Activated T-helper 2 cell treated with anti-CD3 and anti-CD28 coated beads, Interferon-gamma antibody, Interleukin-2, Interleukin-4, amounts not matched to agents 10 μg/mL and 5 μg/mL and 100 μg/mL, durations not matched to agents 14 hours and 24 hours and 36 hours (primary cell): ENCODE measurements at regions of chr6 and their contacts with region 1.

Region 1: DNA sequence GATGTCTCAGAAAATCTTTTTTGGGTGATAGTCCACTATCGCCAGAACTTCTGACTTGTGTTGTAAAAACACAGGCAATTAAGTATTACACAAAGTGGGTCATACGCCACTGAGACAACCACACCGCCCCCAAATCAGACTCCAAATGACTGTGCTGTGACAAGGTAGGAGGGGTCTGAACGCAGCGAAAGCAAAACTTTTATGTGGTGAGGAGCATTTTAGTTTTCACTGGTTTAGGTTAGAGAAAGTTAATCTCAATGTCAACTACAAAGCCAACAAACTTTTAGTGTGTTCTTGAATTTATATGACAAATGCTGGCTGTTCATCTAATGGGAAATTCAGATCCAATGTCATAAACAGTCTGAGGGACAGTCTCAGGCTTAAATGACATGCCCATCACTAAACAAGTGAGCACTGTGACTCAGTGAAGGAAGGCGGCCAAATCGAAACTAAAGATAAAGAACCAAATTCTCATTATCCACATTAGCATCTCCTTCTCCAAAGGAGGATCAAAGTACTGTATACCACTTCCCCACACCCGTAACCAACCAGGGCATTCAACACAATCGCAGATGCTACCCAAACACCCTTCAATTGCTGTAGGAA is 186.7 kb downstream of the GJA10 start:
- DNase-seq: peak; percentile 77
- H3K4me3 Mint-ChIP-seq: peak overlapping the region; percentile 94
- H3K27ac Mint-ChIP-seq: peak overlapping the region; percentile 98
- H3K4me1 Mint-ChIP-seq: peaks cover 78% of the 10 kb centered on the region
- H3K27me3 Mint-ChIP-seq: no peaks in the 10 kb centered on the region

Region 2: DNA sequence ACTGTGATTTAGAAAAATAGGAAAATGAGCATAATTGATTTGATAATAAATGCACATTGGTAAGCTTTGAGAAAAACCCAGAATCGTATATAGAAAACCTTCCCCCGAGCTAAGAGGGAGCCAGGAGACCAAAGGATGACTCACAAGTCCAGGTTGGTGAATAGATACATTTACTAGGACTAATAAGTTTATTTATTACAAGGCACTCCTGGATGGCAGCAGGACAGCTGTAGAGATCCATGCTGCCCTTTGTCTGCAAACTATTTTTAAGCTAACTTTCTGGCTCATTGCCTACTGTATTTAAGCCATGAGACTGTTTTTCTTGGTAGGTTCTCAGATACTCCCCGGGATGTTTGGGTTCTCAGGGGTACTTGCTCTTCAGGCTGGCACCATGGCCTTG is 237.9 kb before region 1 on chr6:
- intact Hi-C with region 1: no loop called
- DNase-seq: no peak
- H3K4me3 Mint-ChIP-seq: no peak overlapping the region
- H3K27ac Mint-ChIP-seq: no peak overlapping the region
- H3K4me1 Mint-ChIP-seq: peaks cover 22% of the 10 kb centered on the region
- H3K27me3 Mint-ChIP-seq: no peaks in the 10 kb centered on the region

Region 3: GRCh38 chr6:90008908-90009501 is 72.0 kb before region 1 on chr6:
- intact Hi-C with region 1: loop called (anchors 2 kb)
- DNase-seq: no peak
- H3K4me3 Mint-ChIP-seq: no peak overlapping the region
- H3K27ac Mint-ChIP-seq: peak overlapping the region; percentile 62
- H3K4me1 Mint-ChIP-seq: peaks cover 30% of the 10 kb centered on the region
- H3K27me3 Mint-ChIP-seq: no peaks in the 10 kb centered on the region

Region 4: GRCh38 chr6:90110971-90111370 is 30.0 kb after region 1 on chr6:
- intact Hi-C with region 1: loop called (anchors 1 kb)
- DNase-seq: peak; percentile 76
- H3K4me3 Mint-ChIP-seq: peak overlapping the region; percentile 0
- H3K27ac Mint-ChIP-seq: peak overlapping the region; percentile 68
- H3K4me1 Mint-ChIP-seq: peaks cover 69% of the 10 kb centered on the region
- H3K27me3 Mint-ChIP-seq: no peaks in the 10 kb centered on the region

Region 5: GRCh38 chr6:90202156-90202555 is 121.2 kb after region 1 on chr6:
- intact Hi-C with region 1: no loop called
- DNase-seq: no peak
- H3K4me3 Mint-ChIP-seq: peak overlapping the region; percentile 50
- H3K27ac Mint-ChIP-seq: peak overlapping the region; percentile 52
- H3K4me1 Mint-ChIP-seq: peaks cover 37% of the 10 kb centered on the region
- H3K27me3 Mint-ChIP-seq: no peaks in the 10 kb centered on the region

Region 6: GRCh38 chr6:90238496-90239266 is 157.7 kb after region 1 on chr6:
- intact Hi-C with region 1: loop called (anchors 1 kb)
- DNase-seq: no peak
- H3K4me3 Mint-ChIP-seq: no peak overlapping the region
- H3K27ac Mint-ChIP-seq: peak overlapping the region; percentile 70
- H3K4me1 Mint-ChIP-seq: peaks cover 68% of the 10 kb centered on the region
- H3K27me3 Mint-ChIP-seq: no peaks in the 10 kb centered on the region

Region 7: GRCh38 chr6:90350689-90351554 is 269.9 kb after region 1 on chr6:
- intact Hi-C with region 1: loop called (anchors 2 kb)
- DNase-seq: peak; percentile 35
- H3K4me3 Mint-ChIP-seq: no peak overlapping the region
- H3K27ac Mint-ChIP-seq: peak overlapping the region; percentile 89
- H3K4me1 Mint-ChIP-seq: peaks cover 47% of the 10 kb centered on the region
- H3K27me3 Mint-ChIP-seq: no peaks in the 10 kb centered on the region

Region 8: GRCh38 chr6:90472744-90473143 is 391.8 kb after region 1 on chr6:
- intact Hi-C with region 1: loop called (anchors 1 kb)
- DNase-seq: peak; percentile 57
- H3K4me3 Mint-ChIP-seq: peak overlapping the region; percentile 72
- H3K27ac Mint-ChIP-seq: peak overlapping the region; percentile 93
- H3K4me1 Mint-ChIP-seq: peaks cover 94% of the 10 kb centered on the region
- H3K27me3 Mint-ChIP-seq: no peaks in the 10 kb centered on the region